ENCODE measurements at regions of chr9 and their contacts with region 1.

Region 1: GRCh38 chr9:93453047-93453914 is at the start of gene FAM120AOS:
- DNase-seq: peak; percentile 95
- H3K4me3 ChIP-seq: peak within 1 kb of the TSS; percentile 46 to 65 (median 56)
- H3K27ac ChIP-seq: peak within 1 kb of the TSS; percentile 83 to 94 (median 93)
- H3K4me1 ChIP-seq: peaks cover 32 to 34% of the 10 kb centered on the region in 2 donors
- H3K27me3 ChIP-seq: no peaks in the 10 kb centered on the region
- CTCF ChIP-seq: no peak
- POLR2A ChIP-seq: peak in 1 of 2 donors; percentile 89
- total RNA-seq, gene FAM120AOS: 68.5 to 92.7 (median 80.8) TPM

Region 2: DNA sequence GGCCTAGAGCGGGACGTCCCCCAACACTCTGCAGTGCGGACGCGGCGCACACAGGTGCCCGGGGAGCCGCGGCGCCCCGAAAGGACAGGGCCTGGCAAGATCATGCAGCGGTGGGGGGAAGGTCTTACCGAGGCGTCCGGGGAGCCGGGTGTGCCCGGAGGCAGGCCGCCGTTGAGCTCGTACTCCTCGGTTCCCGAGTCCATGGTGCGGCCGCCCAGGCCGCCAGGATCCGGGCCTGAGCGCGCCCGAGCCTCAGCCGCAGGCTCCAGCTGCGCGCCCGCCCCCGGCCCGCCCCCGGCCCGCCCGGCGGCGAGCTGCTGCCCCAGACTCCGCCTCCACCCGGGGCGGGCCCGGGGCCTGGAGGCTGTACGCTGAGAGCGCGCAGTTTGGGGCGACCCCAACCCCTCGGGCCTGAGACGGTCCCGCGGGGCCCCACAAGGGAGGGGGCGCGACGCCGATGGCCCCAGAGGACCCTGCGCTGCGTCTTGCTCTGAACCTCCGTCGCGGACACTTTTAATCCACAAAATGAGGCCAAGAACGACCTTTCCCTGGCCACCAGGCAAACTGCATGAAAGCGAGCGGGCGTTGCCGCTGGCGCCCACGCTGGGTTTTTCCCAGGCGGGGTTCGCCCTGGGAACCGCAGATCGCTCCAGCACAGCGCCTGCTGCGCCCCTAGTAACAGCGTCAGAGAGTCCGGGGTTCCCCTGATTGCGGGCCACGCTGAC is 319.1 kb before region 1 on chr9 and contains the start of gene NINJ1:
- intact Hi-C with region 1: loop called (anchors 10 kb)
- DNase-seq: peak; percentile 73 to 76
- H3K4me3 ChIP-seq: peak within 1 kb of the TSS; percentile 50 to 97 (median 88)
- H3K27ac ChIP-seq: peak within 1 kb of the TSS; percentile 93 to 98 (median 96)
- H3K4me1 ChIP-seq: peaks cover 57 to 62% of the 10 kb centered on the region in 2 donors
- H3K27me3 ChIP-seq: no peaks in the 10 kb centered on the region
- CTCF ChIP-seq: peak in 1 of 6 experiments; percentile 28
- POLR2A ChIP-seq: peak; percentile 85 to 97
- total RNA-seq, gene NINJ1: 82.9 to 168 (median 121) TPM

Region 3: DNA sequence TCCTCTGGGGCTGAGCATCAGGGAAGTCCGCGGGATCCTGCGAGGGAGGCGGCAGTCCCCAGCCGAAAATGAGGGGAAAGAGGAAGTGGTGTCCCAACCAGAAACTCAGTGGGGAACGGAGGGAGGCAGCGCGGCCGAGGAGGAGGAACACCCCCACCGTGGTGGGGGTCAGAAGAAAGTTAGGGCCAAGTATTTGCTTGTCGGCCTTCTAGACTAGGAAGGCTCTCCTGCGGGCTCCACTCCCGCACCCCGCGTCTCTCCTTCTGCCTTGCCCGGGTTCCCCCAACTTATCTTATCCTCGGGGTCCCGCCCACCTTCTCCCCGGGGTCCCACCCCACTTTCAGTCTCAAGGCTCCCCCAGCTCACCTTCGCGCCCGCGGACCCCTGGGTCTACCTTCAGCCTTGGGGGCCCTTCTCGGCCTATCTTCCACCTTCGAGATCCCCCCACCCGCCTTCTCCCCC is 122.5 kb after region 1 on chr9:
- intact Hi-C with region 1: loop called (anchors 5 kb)
- DNase-seq: peak; percentile 55 to 62
- H3K4me3 ChIP-seq: peak overlapping the region; percentile 14 to 95 (median 75)
- H3K27ac ChIP-seq: peak overlapping the region; percentile 89 to 94 (median 92)
- H3K4me1 ChIP-seq: peaks cover 38 to 41% of the 10 kb centered on the region in 2 donors
- H3K27me3 ChIP-seq: no peaks in the 10 kb centered on the region
- CTCF ChIP-seq: no peak
- POLR2A ChIP-seq: peak in 1 of 2 donors; percentile 5